Right ventricle myocardium inferior (tissue), 1 donor: ENCODE measurements at regions of chr7 and their contacts with region 1.

Region 1: GRCh38 chr7:2519119-2519930 is at the start of gene LFNG:
- DNase-seq: peak; percentile 94
- ATAC-seq: peak; percentile 92
- total RNA-seq, gene LFNG: 6.5 TPM

Region 2: DNA sequence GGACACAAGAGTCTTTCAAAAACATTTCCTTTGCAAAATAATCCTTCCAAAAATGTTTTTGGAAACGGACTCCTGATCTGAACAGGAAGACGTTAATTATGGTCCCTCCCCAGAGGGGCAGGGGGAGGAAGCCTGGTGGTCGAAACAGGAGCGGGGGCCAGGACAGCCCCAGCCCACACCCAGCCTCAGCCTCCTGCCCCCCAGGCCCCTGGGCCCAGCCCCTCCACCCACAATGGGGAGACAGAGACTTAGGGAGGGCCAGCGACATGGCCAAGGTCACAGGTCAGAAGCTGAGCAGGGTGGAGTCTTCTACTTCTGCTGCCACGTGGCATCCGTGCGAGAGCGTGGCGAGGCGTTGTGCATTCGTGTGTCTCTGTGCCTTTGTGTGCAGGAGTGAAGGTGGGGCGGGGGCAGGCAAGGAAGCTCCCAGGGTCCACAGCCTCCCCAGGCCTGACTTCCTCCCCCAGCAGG is 29.1 kb before region 1 on chr7:
- intact Hi-C with region 1: loop called (anchors 2 kb)
- DNase-seq: peak; percentile 65
- ATAC-seq: no peak